PC-9 (cell line): ENCODE measurements at regions of chr9 and their contacts with region 1.

Region 1: DNA sequence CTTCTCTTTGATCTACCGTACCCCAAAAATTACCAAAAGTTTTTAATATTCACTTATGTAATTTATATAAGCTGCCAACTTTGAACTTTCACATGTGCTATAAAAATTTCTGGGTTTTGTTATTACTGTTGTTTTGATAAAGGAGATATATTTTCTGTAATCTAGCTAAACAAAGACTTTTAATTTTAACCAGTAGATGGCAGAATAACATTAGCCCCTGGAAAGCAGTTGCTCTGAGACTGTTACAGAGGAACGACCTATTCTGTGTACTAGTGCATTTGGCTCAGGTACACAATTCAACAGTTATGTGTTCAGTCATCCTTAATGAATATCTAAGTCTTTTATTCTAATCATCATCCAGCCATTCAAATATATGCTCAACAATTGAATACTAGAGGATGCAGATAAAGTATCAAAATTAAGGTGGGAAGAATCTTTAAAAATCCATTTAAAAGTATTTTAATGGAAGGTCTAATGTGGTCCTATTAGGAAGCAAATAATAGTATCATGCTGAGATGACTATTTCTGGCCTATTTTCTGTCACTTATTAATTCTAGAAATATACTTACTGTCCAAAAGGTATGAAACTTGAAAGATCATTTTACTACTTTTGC is 8.6 kb downstream of the KLHL9 start:
- DNase-seq: no peak
- H3K4me3 ChIP-seq: no peak overlapping the region
- H3K27ac ChIP-seq: no peak overlapping the region
- H3K4me1 ChIP-seq: no peaks in the 10 kb centered on the region
- H3K27me3 ChIP-seq: no peaks in the 10 kb centered on the region
- CTCF ChIP-seq: peak; percentile 72

Region 2: GRCh38 chr9:20914556-20914955 is 412.1 kb before region 1 on chr9:
- CTCF ChIA-PET with region 1: no interaction called
- POLR2A ChIA-PET with region 1: no interaction called
- intact Hi-C with region 1: no loop called
- DNase-seq: no peak
- H3K4me3 ChIP-seq: no peak overlapping the region
- H3K27ac ChIP-seq: no peak overlapping the region
- H3K4me1 ChIP-seq: no peaks in the 10 kb centered on the region
- H3K27me3 ChIP-seq: no peaks in the 10 kb centered on the region
- CTCF ChIP-seq: no peak

Region 3: GRCh38 chr9:21281275-21281674 is 45.4 kb before region 1 on chr9:
- CTCF ChIA-PET with region 1: no interaction called
- POLR2A ChIA-PET with region 1: no interaction called
- intact Hi-C with region 1: no loop called
- DNase-seq: no peak
- H3K4me3 ChIP-seq: no peak overlapping the region
- H3K27ac ChIP-seq: no peak overlapping the region
- H3K4me1 ChIP-seq: no peaks in the 10 kb centered on the region
- H3K27me3 ChIP-seq: no peaks in the 10 kb centered on the region
- CTCF ChIP-seq: no peak

Region 4: DNA sequence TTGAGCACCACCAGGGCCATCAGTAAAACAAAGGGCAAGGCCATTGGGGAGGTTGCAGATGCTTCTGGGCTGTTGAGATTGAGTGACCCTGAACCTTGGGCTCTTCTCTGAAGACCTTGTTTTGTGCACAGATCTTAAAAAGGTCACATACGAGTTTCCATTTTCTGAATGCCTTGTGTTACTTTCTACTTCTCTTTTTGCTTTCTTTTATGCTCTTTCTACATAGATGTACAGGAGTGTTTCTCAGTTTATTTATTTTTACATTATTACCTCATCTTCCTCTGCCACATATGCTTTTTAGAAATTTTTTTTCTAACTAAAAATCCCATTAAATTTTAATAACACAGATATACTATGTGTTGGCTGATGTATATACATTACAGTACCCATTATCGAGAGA is 21.4 kb before region 1 on chr9 and contains the start of gene IFNA5:
- CTCF ChIA-PET with region 1: no interaction called
- POLR2A ChIA-PET with region 1: no interaction called
- intact Hi-C with region 1: no loop called
- DNase-seq: no peak
- H3K4me3 ChIP-seq: no peak within 1 kb of the TSS
- H3K27ac ChIP-seq: no peak within 1 kb of the TSS
- H3K4me1 ChIP-seq: no peaks in the 10 kb centered on the region
- H3K27me3 ChIP-seq: no peaks in the 10 kb centered on the region
- CTCF ChIP-seq: no peak
- total RNA-seq, gene IFNA5: not detected in 2 replicates

Region 5: GRCh38 chr9:21465859-21466518 is 139.4 kb after region 1 on chr9:
- CTCF ChIA-PET with region 1: no interaction called
- POLR2A ChIA-PET with region 1: no interaction called
- intact Hi-C with region 1: loop called (anchors 5 kb)
- DNase-seq: peak; percentile 4 to 51
- H3K4me3 ChIP-seq: no peak overlapping the region
- H3K27ac ChIP-seq: no peak overlapping the region
- H3K4me1 ChIP-seq: no peaks in the 10 kb centered on the region
- H3K27me3 ChIP-seq: no peaks in the 10 kb centered on the region
- CTCF ChIP-seq: peak; percentile 71

Region 6: GRCh38 chr9:21559424-21560280 is 233.0 kb after region 1 on chr9:
- CTCF ChIA-PET with region 1: no interaction called
- POLR2A ChIA-PET with region 1: no interaction called
- intact Hi-C with region 1: loop called (anchors 10 kb)
- DNase-seq: peak; percentile 68 to 83
- H3K4me3 ChIP-seq: peak overlapping the region; percentile 80
- H3K27ac ChIP-seq: peak overlapping the region; percentile 77
- H3K4me1 ChIP-seq: peaks cover 9% of the 10 kb centered on the region; the same call in 1 of the 2 replicates
- H3K27me3 ChIP-seq: no peaks in the 10 kb centered on the region
- CTCF ChIP-seq: no peak

Region 7: DNA sequence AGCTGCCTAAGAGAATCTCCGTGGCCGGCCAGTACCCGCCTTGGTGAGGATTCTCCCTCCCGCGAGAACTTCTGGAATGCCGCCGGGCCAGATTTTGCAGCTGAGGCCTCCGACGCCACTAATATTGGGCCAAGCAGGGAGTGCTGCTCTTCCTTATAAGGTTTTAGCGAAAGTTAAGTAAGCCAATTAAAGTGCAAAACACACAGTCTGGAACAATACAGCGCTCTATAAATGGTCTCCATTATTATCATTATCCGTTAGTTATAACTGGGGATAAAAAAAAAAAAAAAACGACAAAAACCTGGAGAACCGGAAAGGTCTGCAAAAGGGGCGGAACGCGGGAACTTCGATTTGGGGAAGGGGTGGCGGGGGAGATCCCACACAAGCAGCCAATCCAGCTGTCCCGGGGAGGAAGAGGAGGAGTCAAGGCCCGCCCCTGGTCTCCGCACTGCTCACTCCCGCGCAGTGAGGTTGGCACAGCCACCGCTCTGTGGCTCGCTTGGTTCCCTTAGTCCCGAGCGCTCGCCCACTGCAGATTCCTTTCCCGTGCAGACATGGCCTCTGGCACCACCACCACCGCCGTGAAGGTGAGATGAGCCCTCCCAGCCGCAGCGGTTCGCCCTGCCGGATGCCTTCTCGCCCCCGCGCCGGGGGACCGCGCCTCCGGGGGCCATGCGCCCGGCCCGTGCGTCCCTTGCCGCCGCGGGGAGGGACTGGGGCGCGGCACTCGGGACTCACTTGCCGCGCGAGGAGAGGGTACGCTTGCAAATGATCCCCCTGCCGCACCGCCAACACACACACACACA is 475.8 kb after region 1 on chr9 and contains the start of gene MTAP:
- CTCF ChIA-PET with region 1: no interaction called
- POLR2A ChIA-PET with region 1: no interaction called
- intact Hi-C with region 1: loop called (anchors 5 kb)
- DNase-seq: peak; percentile 81 to 84
- H3K4me3 ChIP-seq: peak within 1 kb of the TSS; percentile 87
- H3K27ac ChIP-seq: peak within 1 kb of the TSS; percentile 78
- H3K4me1 ChIP-seq: peaks cover 27% of the 10 kb centered on the region
- H3K27me3 ChIP-seq: no peaks in the 10 kb centered on the region
- CTCF ChIP-seq: no peak
- total RNA-seq, gene MTAP: 44.1 and 46.1 TPM in 2 replicates

Region 8: DNA sequence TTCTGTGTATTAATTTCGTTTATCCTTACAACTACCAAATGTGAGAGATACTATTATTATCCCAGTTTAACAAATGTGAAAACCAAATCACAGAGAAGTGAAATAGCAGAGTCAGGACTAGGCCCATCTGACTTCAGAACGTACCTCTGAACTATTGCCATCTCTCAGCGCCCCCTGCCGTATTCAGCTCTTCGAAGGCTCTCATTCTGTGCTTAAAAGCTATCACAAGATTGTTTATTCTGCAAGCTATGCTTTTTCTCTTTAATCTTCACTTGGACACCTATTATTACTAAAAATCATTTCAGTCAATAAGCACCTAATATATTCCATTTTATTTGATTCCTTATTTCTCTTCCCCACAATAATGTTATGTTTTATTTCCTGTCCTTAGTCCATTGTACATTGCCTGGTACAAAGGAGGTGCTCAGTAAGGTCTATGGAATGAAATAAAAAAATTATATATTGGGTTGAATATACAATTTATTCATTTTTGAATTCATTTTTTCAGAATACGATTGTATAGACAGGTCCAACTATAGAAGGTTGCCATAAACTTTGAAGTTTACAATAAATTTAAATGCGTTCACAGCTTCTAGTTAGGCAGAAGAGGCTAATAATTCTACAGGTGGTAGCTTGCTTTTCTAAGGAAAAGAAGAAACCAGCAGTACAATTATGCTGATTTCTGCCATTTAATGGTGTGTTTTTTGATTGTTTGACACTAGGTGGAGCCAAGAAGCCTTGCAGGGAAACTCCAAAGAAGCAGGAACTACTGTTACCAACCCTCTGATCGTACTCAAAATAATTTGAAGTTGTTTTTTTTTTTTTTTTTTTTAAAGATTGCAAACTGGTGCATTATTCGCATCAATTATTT is 917.7 kb after region 1 on chr9:
- CTCF ChIA-PET with region 1: no interaction called
- POLR2A ChIA-PET with region 1: no interaction called
- intact Hi-C with region 1: loop called (anchors 10 kb)
- DNase-seq: peak in 1 of 2 experiments; percentile 49
- H3K4me3 ChIP-seq: no peak overlapping the region
- H3K27ac ChIP-seq: no peak overlapping the region
- H3K4me1 ChIP-seq: peaks cover 31% of the 10 kb centered on the region
- H3K27me3 ChIP-seq: no peaks in the 10 kb centered on the region
- CTCF ChIP-seq: peak; percentile 14

Region 9: DNA sequence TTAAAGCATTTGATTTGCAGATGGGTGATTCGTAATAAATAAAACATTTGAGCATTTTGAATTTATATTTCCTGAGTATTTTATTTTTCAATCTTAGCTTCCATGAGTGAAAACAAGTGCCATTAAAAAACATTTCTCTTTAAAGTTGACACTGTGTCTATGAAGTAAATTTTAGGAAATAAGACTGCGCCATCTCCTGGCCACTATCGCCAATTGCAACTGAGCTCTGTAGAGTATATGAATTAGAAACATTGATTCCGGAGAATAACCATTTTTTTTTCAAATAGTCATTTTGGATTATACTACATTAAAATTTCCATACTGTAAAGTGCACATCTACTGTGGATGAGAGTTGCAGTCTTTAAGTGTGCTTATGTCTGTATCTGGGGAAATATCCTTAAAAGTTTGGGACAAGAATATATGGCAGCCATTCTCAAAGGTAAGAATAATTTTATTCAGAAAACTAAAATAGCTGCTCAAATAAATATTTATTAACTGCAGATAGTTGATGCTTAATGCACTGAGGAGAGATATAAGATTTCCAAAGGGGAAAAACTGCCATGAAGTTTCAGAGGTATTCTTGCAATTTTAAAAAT is 1125.9 kb after region 1 on chr9:
- CTCF ChIA-PET with region 1: no interaction called
- POLR2A ChIA-PET with region 1: no interaction called
- intact Hi-C with region 1: loop called (anchors 2 kb)
- DNase-seq: peak in 1 of 2 experiments; percentile 27
- H3K4me3 ChIP-seq: no peak overlapping the region
- H3K27ac ChIP-seq: no peak overlapping the region
- H3K4me1 ChIP-seq: peaks cover 12% of the 10 kb centered on the region; the same call in 1 of the 2 replicates
- H3K27me3 ChIP-seq: no peaks in the 10 kb centered on the region
- CTCF ChIP-seq: peak; percentile 82